ENCODE measurements at regions of chr7 and their contacts with region 1.

Region 1: GRCh38 chr7:144391823-144392255 is 11.7 kb downstream of the NOBOX start:
- DNase-seq: peak in 1 of 2 experiments; percentile 45
- H3K4me3 ChIP-seq: no peak overlapping the region
- H3K27ac ChIP-seq: no peak overlapping the region
- H3K4me1 ChIP-seq: peaks cover 0 to 2% (median 0%) of the 10 kb centered on the region in 4 experiments; a peak in 2 of 7 replicates
- H3K27me3 ChIP-seq: no peaks in the 10 kb centered on the region
- CTCF ChIP-seq: peak in 2 of 3 experiments; percentile 63 to 67; a peak in 3 of 4 replicates
- EP300 ChIP-seq: no peak
- POLR2A ChIP-seq: no peak
- RAD21 ChIP-seq: peak; percentile 86 to 90

Region 2: DNA sequence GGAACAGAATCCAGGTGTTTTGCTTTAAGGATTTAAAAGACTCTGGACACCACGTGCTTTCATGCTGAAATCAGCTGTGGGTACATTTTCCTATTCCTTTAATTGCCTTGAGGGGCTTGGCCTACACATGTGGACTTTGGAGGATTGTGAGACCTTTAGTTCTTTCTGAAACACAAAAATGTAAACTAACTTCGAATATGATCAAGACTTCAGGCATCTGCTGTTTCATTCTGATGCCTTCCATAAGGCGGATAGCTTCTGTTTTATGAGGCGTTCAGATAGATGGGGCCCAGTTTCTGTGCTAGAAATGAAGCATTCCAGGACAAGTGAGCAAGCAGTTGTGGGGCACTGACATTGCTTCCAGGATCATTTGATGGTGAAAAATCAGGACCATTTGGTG is 13.1 kb after region 1 on chr7:
- CTCF ChIA-PET with region 1: interaction called, 23 read pairs
- POLR2A ChIA-PET with region 1: interaction called, 3 read pairs
- DNase-seq: no peak
- H3K4me3 ChIP-seq: no peak overlapping the region
- H3K27ac ChIP-seq: no peak overlapping the region
- H3K4me1 ChIP-seq: peaks cover 0 to 6% (median 3%) of the 10 kb centered on the region in 4 experiments; a peak in 4 of 7 replicates
- H3K27me3 ChIP-seq: peaks cover 0 to 2% (median 0%) of the 10 kb centered on the region in 4 experiments; a peak in 1 of 7 replicates
- CTCF ChIP-seq: no peak
- EP300 ChIP-seq: no peak
- POLR2A ChIP-seq: no peak
- RAD21 ChIP-seq: no peak

Region 3: GRCh38 chr7:144410441-144410840 is 18.6 kb after region 1 on chr7:
- CTCF ChIA-PET with region 1: interaction called, 23 read pairs
- POLR2A ChIA-PET with region 1: no interaction called
- DNase-seq: no peak
- H3K4me3 ChIP-seq: no peak overlapping the region
- H3K27ac ChIP-seq: no peak overlapping the region
- H3K4me1 ChIP-seq: peaks cover 0 to 6% (median 3%) of the 10 kb centered on the region in 4 experiments; a peak in 4 of 7 replicates
- H3K27me3 ChIP-seq: peaks cover 0 to 2% (median 0%) of the 10 kb centered on the region in 4 experiments; a peak in 1 of 7 replicates
- CTCF ChIP-seq: no peak
- EP300 ChIP-seq: no peak
- POLR2A ChIP-seq: no peak
- RAD21 ChIP-seq: no peak

Region 4: GRCh38 chr7:144481833-144482232 is 90.0 kb after region 1 on chr7:
- CTCF ChIA-PET with region 1: no interaction called
- POLR2A ChIA-PET with region 1: no interaction called
- DNase-seq: no peak
- H3K4me3 ChIP-seq: no peak overlapping the region
- H3K27ac ChIP-seq: no peak overlapping the region
- H3K4me1 ChIP-seq: peaks cover 0 to 3% (median 0%) of the 10 kb centered on the region in 4 experiments; a peak in 1 of 7 replicates
- H3K27me3 ChIP-seq: peaks cover 0 to 1% (median 0%) of the 10 kb centered on the region in 4 experiments; a peak in 1 of 7 replicates
- CTCF ChIP-seq: no peak
- EP300 ChIP-seq: no peak
- POLR2A ChIP-seq: no peak
- RAD21 ChIP-seq: no peak

Region 5: DNA sequence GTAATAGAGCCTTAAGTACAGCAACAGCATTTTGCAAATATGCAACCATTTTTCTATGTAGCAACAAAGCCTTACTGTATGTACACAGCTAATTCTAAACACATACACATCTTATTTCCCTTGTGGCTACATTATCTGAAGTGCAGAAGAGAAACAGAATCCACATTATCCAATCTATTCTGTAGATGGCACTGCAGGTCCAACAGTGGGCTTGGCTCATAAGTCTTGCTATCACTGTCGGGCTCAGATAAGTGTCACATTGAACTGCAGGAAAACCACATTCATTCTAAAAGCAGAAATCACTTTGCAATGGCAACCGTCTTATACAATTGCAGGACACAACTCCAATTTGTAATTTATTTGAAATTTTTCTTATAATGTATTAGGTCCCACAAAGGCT is 121.5 kb after region 1 on chr7:
- CTCF ChIA-PET with region 1: no interaction called
- POLR2A ChIA-PET with region 1: no interaction called
- DNase-seq: no peak
- H3K4me3 ChIP-seq: no peak overlapping the region
- H3K27ac ChIP-seq: no peak overlapping the region
- H3K4me1 ChIP-seq: peaks cover 0 to 12% (median 4%) of the 10 kb centered on the region in 4 experiments; a peak in 3 of 7 replicates
- H3K27me3 ChIP-seq: no peaks in the 10 kb centered on the region
- CTCF ChIP-seq: peak in 2 of 3 experiments; percentile 55; a peak in 3 of 4 replicates
- EP300 ChIP-seq: no peak
- POLR2A ChIP-seq: no peak
- RAD21 ChIP-seq: peak; percentile 84 to 86

Measured in H1 (cell line).